PC-9 (cell line): ENCODE measurements at regions of chr5 and their contacts with region 1.

Region 1: GRCh38 chr5:180328296-180329137 is 24.6 kb downstream of the GFPT2 start:
- DNase-seq: peak; percentile 55 to 78
- H3K4me3 ChIP-seq: no peak overlapping the region
- H3K27ac ChIP-seq: no peak overlapping the region
- H3K4me1 ChIP-seq: peaks cover 45% of the 10 kb centered on the region
- H3K27me3 ChIP-seq: no peaks in the 10 kb centered on the region
- CTCF ChIP-seq: peak; percentile 90

Region 2: GRCh38 chr5:180315762-180316212 is 12.7 kb before region 1 on chr5:
- CTCF ChIA-PET with region 1: interaction called, 16 read pairs
- POLR2A ChIA-PET with region 1: interaction called, 3 read pairs
- intact Hi-C with region 1: loop called (anchors 2 kb)
- DNase-seq: peak; percentile 43 to 73
- H3K4me3 ChIP-seq: no peak overlapping the region
- H3K27ac ChIP-seq: no peak overlapping the region
- H3K4me1 ChIP-seq: no peaks in the 10 kb centered on the region
- H3K27me3 ChIP-seq: no peaks in the 10 kb centered on the region
- CTCF ChIP-seq: peak; percentile 98

Region 3: GRCh38 chr5:180470966-180471582 is 142.6 kb after region 1 on chr5:
- CTCF ChIA-PET with region 1: interaction called, 5 read pairs
- POLR2A ChIA-PET with region 1: interaction called, 6 read pairs
- intact Hi-C with region 1: loop called (anchors 1 kb)
- DNase-seq: peak in 1 of 2 experiments; percentile 63
- H3K4me3 ChIP-seq: no peak overlapping the region
- H3K27ac ChIP-seq: no peak overlapping the region
- H3K4me1 ChIP-seq: no peaks in the 10 kb centered on the region; the same call in 1 of the 2 replicates
- H3K27me3 ChIP-seq: no peaks in the 10 kb centered on the region
- CTCF ChIP-seq: peak; percentile 98

Region 4: GRCh38 chr5:181133610-181134231 is 805.2 kb after region 1 on chr5:
- CTCF ChIA-PET with region 1: interaction called, 12 read pairs
- POLR2A ChIA-PET with region 1: no interaction called
- intact Hi-C with region 1: no loop called
- DNase-seq: peak; percentile 72 to 80
- H3K4me3 ChIP-seq: peak overlapping the region; percentile 7; the same call in 1 of the 2 replicates
- H3K27ac ChIP-seq: peak overlapping the region; percentile 73
- H3K4me1 ChIP-seq: peaks cover 27% of the 10 kb centered on the region
- H3K27me3 ChIP-seq: no peaks in the 10 kb centered on the region
- CTCF ChIP-seq: no peak